Activated CD4-positive, alpha-beta memory T cell treated with anti-CD3 and anti-CD28 coated beads for 36 hours (primary cell): ENCODE measurements at regions of chr3 and their contacts with region 1.

Region 1: DNA sequence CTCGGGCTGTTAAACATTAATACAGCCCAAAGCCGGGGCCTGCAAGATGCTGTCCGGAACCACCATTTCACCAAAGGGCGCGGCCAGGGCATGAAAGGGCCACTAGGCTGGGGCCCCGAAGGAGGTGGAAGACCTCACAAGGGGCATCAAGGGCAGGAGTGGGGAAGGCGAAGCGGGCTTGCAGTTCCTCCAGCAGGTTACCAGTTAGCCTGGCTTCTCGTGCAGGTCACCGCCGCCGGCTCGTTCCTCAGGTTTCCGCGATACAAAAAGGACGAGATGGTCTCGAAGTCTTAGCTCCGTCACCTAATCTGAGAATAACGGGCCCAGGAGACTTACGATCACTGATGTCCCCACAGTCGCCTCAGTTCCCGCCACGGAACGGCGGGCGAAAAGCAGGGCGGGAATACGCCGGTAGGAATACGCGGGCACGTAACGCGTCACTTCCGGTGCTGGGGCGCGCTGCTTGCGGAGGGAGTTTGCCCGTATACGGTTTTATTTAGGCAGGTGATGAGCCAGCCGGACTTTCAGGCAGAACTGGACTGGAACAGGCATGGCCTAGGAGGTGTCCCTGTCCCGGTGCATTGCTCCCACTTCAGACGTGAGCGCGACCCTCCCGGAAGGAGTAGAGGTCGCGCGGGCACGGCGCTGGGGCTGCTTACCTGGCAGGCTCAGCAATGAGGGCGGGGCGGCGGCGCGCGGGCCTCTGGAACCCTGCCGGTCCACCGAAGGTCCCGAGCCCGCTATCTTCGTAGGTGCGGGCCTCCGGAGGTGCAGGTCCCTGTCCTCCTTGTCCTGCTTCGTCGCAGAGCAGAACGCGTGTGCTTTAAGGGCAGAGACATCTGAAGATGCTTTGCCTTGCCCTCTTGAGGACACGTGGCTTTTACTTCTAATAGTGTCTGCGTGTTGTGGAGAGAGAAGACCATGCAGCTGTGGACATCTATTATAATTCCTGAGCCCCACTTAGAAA is at the start of gene RFC4:
- DNase-seq: peak; percentile 91
- H3K4me3 Mint-ChIP-seq: peak within 1 kb of the TSS; percentile 93
- H3K27ac Mint-ChIP-seq: peak within 1 kb of the TSS; percentile 93
- H3K4me1 Mint-ChIP-seq: peaks cover 24% of the 10 kb centered on the region
- H3K27me3 Mint-ChIP-seq: no peaks in the 10 kb centered on the region
- total RNA-seq, gene RFC4: 118 to 127 TPM

Region 2: GRCh38 chr3:186708983-186709679 is 97.2 kb before region 1 on chr3:
- CTCF ChIA-PET with region 1: no interaction called
- POLR2A ChIA-PET with region 1: no interaction called
- intact Hi-C with region 1: no loop called
- DNase-seq: no peak
- H3K4me3 Mint-ChIP-seq: no peak overlapping the region
- H3K27ac Mint-ChIP-seq: no peak overlapping the region
- H3K4me1 Mint-ChIP-seq: peaks cover 11% of the 10 kb centered on the region
- H3K27me3 Mint-ChIP-seq: peaks cover 21% of the 10 kb centered on the region

Region 3: GRCh38 chr3:186719945-186720739 is 86.2 kb before region 1 on chr3:
- CTCF ChIA-PET with region 1: no interaction called
- POLR2A ChIA-PET with region 1: no interaction called
- intact Hi-C with region 1: no loop called
- DNase-seq: no peak
- H3K4me3 Mint-ChIP-seq: no peak overlapping the region
- H3K27ac Mint-ChIP-seq: no peak overlapping the region
- H3K4me1 Mint-ChIP-seq: no peaks in the 10 kb centered on the region
- H3K27me3 Mint-ChIP-seq: no peaks in the 10 kb centered on the region

Region 4: DNA sequence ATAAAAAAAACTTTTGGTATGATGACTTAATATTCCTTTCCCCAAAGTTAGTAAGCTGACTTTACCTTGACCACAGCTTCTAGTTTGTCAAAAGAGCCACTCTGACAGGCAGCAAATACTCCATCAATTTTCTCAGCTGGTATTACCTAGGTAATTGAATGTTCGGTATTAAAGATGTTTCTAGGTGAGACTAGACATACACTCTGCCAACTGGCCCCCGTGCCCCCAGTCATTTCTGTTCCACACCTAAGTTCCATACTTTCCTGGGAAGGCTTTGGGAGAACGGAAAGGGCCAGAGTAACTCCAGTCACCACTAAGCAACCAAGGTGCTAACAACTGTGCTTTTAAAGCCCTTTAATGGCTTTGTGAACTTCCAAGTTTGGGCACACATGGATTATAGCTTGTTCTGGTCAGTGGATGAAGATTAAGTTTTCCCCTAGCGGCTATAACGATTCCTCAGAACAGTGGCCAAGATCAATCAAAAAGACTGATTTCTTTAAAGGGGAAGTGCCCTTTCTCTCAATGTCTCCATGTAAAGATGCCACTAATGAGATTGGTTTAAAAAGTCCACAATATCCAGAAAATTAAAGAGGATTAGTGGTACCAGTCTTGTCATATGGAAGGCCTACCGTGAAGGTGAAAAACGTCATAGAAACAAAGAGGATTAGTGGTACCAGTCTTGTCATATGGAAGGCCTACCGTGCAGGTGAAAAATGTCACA is 16.0 kb before region 1 on chr3:
- CTCF ChIA-PET with region 1: no interaction called
- POLR2A ChIA-PET with region 1: interaction called, 10 read pairs
- intact Hi-C with region 1: no loop called
- DNase-seq: no peak
- H3K4me3 Mint-ChIP-seq: peak overlapping the region; percentile 2
- H3K27ac Mint-ChIP-seq: peak overlapping the region; percentile 67
- H3K4me1 Mint-ChIP-seq: peaks cover 42% of the 10 kb centered on the region
- H3K27me3 Mint-ChIP-seq: no peaks in the 10 kb centered on the region

Region 5: GRCh38 chr3:186839874-186840641 is 33.7 kb after region 1 on chr3:
- CTCF ChIA-PET with region 1: no interaction called
- POLR2A ChIA-PET with region 1: no interaction called
- intact Hi-C with region 1: no loop called
- DNase-seq: no peak
- H3K4me3 Mint-ChIP-seq: no peak overlapping the region
- H3K27ac Mint-ChIP-seq: no peak overlapping the region
- H3K4me1 Mint-ChIP-seq: no peaks in the 10 kb centered on the region
- H3K27me3 Mint-ChIP-seq: peaks cover 3% of the 10 kb centered on the region

Region 6: GRCh38 chr3:186882881-186883685 is 76.7 kb after region 1 on chr3:
- CTCF ChIA-PET with region 1: no interaction called
- POLR2A ChIA-PET with region 1: no interaction called
- intact Hi-C with region 1: no loop called
- DNase-seq: peak; percentile 80
- H3K4me3 Mint-ChIP-seq: peak overlapping the region; percentile 59
- H3K27ac Mint-ChIP-seq: peak overlapping the region; percentile 90
- H3K4me1 Mint-ChIP-seq: peaks cover 63% of the 10 kb centered on the region
- H3K27me3 Mint-ChIP-seq: no peaks in the 10 kb centered on the region